ENCODE measurements at regions of chr9 and their contacts with region 1.

Region 1: GRCh38 chr9:10806868-10807267 is 194.1 kb upstream of the PTPRD start:
- DNase-seq: no peak
- ATAC-seq: no peak
- H3K4me3 ChIP-seq: no peak overlapping the region
- H3K27ac ChIP-seq: no peak overlapping the region
- H3K4me1 ChIP-seq: no peaks in the 10 kb centered on the region
- H3K27me3 ChIP-seq: no peaks in the 10 kb centered on the region
- CTCF ChIP-seq: no peak
- POLR2A ChIP-seq: no peak

Region 2: GRCh38 chr9:9855177-9856078 is 951.4 kb before region 1 on chr9:
- in situ Hi-C with region 1: no loop called
- intact Hi-C with region 1: no loop called
- DNase-seq: no peak
- ATAC-seq: no peak
- H3K4me3 ChIP-seq: no peak overlapping the region
- H3K27ac ChIP-seq: no peak overlapping the region
- H3K4me1 ChIP-seq: no peaks in the 10 kb centered on the region
- H3K27me3 ChIP-seq: no peaks in the 10 kb centered on the region
- CTCF ChIP-seq: no peak
- POLR2A ChIP-seq: no peak

Region 3: DNA sequence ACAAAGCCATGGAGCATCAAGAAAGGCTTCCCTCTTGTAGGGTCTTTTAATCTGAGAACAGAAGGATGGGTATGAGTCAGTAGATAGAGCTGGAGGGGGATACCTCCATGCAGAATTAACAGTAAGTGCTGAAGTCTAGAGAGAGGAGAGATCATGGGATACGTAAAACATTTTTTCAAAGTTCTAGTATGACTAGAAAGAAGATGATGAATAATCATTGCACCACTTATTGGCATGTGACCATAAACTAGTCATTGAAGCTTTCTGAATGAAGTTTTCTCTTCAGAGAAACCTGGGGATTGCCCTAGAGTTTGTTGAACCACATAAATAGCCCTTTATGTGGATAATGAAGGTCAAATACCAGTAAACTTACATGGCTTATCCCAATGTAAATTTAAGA is 145.5 kb before region 1 on chr9:
- in situ Hi-C with region 1: loop called in 1 of 4 experiments (anchors 25 kb)
- intact Hi-C with region 1: no loop called
- DNase-seq: no peak
- ATAC-seq: no peak
- H3K4me3 ChIP-seq: no peak overlapping the region
- H3K27ac ChIP-seq: no peak overlapping the region
- H3K4me1 ChIP-seq: no peaks in the 10 kb centered on the region
- H3K27me3 ChIP-seq: no peaks in the 10 kb centered on the region
- CTCF ChIP-seq: no peak
- POLR2A ChIP-seq: no peak

Region 4: GRCh38 chr9:10721301-10721700 is 85.6 kb before region 1 on chr9:
- in situ Hi-C with region 1: no loop called
- intact Hi-C with region 1: no loop called
- DNase-seq: no peak
- ATAC-seq: no peak
- H3K4me3 ChIP-seq: no peak overlapping the region
- H3K27ac ChIP-seq: no peak overlapping the region
- H3K4me1 ChIP-seq: no peaks in the 10 kb centered on the region
- H3K27me3 ChIP-seq: no peaks in the 10 kb centered on the region
- CTCF ChIP-seq: no peak
- POLR2A ChIP-seq: no peak

Region 5: GRCh38 chr9:10903969-10904368 is 97.1 kb after region 1 on chr9:
- in situ Hi-C with region 1: loop called in 1 of 4 experiments (anchors 25 kb)
- intact Hi-C with region 1: no loop called
- DNase-seq: no peak
- ATAC-seq: no peak
- H3K4me3 ChIP-seq: no peak overlapping the region
- H3K27ac ChIP-seq: no peak overlapping the region
- H3K4me1 ChIP-seq: no peaks in the 10 kb centered on the region
- H3K27me3 ChIP-seq: no peaks in the 10 kb centered on the region
- CTCF ChIP-seq: no peak
- POLR2A ChIP-seq: no peak